Activated B cell treated with CpG ODN at 0.5 μM for 24 hours (primary cell): ENCODE measurements at regions of chr12 and their contacts with region 1.

Region 1: GRCh38 chr12:104230304-104231095 is 14.9 kb downstream of the TXNRD1 start:
- DNase-seq: no peak
- ATAC-seq: no peak
- H3K4me3 Mint-ChIP-seq: no peak overlapping the region
- H3K27ac Mint-ChIP-seq: no peak overlapping the region
- H3K4me1 Mint-ChIP-seq: no peaks in the 10 kb centered on the region
- H3K27me3 Mint-ChIP-seq: peaks cover 4% of the 10 kb centered on the region
- CTCF ChIP-seq: no peak

Region 2: GRCh38 chr12:104627990-104628830 is 397.7 kb after region 1 on chr12:
- CTCF ChIA-PET with region 1: no interaction called
- POLR2A ChIA-PET with region 1: interaction called, 11 read pairs
- intact Hi-C with region 1: no loop called
- DNase-seq: no peak
- ATAC-seq: no peak
- H3K4me3 Mint-ChIP-seq: no peak overlapping the region
- H3K27ac Mint-ChIP-seq: peak overlapping the region; percentile 10
- H3K4me1 Mint-ChIP-seq: peaks cover 35% of the 10 kb centered on the region
- H3K27me3 Mint-ChIP-seq: no peaks in the 10 kb centered on the region
- CTCF ChIP-seq: no peak